ENCODE measurements at regions of chr12 and their contacts with region 1.

Region 1: DNA sequence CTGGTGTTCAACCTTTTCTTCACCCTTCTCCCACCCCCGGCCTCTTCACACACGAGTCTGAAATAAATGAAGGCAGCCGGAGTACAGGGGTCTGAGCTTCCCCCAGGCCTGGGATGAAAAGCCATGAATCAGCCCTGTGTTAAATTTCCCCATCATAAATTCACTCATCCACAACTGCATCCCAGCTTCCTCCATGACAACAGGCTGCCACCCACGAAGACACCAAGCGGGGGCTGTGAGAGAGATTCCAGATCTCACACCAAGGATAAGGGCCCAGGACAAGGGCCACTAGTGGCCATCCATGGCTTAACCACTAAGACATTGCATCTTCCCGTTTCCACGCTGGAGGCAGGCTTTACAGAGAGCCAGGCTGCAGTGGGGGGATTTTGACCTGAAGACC is 93.9 kb upstream of the NCOR2 start:
- DNase-seq: no peak
- ATAC-seq: no peak
- H3K4me3 ChIP-seq: no peak overlapping the region
- H3K4me3 Mint-ChIP-seq: no peak overlapping the region
- H3K27ac ChIP-seq: no peak overlapping the region
- H3K27ac Mint-ChIP-seq: no peak overlapping the region
- H3K4me1 ChIP-seq: no peaks in the 10 kb centered on the region
- H3K4me1 Mint-ChIP-seq: no peaks in the 10 kb centered on the region
- H3K27me3 ChIP-seq: peaks cover 0 to 4% (median 0%) of the 10 kb centered on the region in 4 experiments
- H3K27me3 Mint-ChIP-seq: peaks cover 20% of the 10 kb centered on the region
- CTCF ChIP-seq: no peak

Region 2: GRCh38 chr12:124310178-124310577 is 351.2 kb before region 1 on chr12:
- CTCF ChIA-PET with region 1: no interaction called
- POLR2A ChIA-PET with region 1: interaction called, 12 read pairs
- intact Hi-C with region 1: no loop called
- DNase-seq: no peak
- ATAC-seq: no peak
- H3K4me3 ChIP-seq: no peak overlapping the region
- H3K4me3 Mint-ChIP-seq: no peak overlapping the region
- H3K27ac ChIP-seq: no peak overlapping the region
- H3K27ac Mint-ChIP-seq: no peak overlapping the region
- H3K4me1 ChIP-seq: no peaks in the 10 kb centered on the region
- H3K4me1 Mint-ChIP-seq: no peaks in the 10 kb centered on the region
- H3K27me3 ChIP-seq: no peaks in the 10 kb centered on the region
- H3K27me3 Mint-ChIP-seq: no peaks in the 10 kb centered on the region
- CTCF ChIP-seq: no peak

Region 3: DNA sequence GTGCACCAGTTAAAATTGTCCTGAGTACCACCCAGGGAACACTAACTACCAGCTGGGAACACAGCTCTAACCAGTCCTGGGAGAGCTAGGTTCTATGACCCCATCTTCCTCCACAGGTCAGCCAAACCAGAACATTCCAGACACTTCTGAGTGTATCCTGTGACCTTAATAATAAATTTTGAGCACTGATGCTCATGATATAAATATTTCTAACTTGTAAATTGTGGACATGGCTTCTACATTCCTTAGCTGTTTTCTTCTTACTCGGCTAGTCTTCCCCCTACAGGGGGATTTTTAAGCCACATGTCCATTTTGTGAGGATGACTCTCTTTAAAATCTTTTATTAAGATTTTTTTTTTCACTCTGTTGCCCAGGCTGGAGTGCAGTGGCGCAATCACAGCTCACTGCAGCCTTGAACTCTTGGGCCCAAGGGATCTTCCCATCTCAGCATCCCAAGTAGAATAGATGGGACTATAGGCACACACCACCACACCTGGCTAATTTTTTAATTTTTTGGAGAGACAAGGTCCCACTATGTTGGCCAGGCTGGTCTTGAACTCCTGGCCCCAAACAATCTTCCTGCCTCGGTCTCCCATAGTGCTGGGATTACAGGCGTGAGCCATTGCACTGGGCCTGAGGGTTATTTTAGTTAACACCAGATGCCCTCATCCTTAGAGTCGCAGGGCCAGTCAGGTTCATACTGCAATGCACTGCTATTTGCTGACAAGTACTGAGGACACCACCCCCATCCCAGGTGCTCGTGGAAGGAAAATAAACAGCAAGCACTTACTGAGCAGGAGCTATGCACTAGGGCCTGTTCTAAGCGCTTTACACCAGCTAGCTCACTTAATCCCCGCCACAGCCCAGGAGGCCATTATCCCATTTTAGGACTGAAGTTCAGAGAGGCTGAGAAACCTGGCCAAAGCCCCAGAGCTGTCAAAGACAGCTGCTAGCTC is 48.7 kb after region 1 on chr12:
- CTCF ChIA-PET with region 1: no interaction called
- POLR2A ChIA-PET with region 1: no interaction called
- intact Hi-C with region 1: no loop called
- DNase-seq: no peak
- ATAC-seq: no peak
- H3K4me3 ChIP-seq: no peak overlapping the region
- H3K4me3 Mint-ChIP-seq: no peak overlapping the region
- H3K27ac ChIP-seq: no peak overlapping the region
- H3K27ac Mint-ChIP-seq: no peak overlapping the region
- H3K4me1 ChIP-seq: peaks cover 16 to 17% of the 10 kb centered on the region in 2 donors
- H3K4me1 Mint-ChIP-seq: peaks cover 16% of the 10 kb centered on the region
- H3K27me3 ChIP-seq: no peaks in the 10 kb centered on the region
- H3K27me3 Mint-ChIP-seq: no peaks in the 10 kb centered on the region
- CTCF ChIP-seq: no peak

Measured in B cell (primary cell).